Activated CD8-positive, alpha-beta memory T cell treated with anti-CD3 and anti-CD28 coated beads, Interleukin-2, amount 10 ng/mL, durations not matched to agents 7 days and 5 days (primary cell): ENCODE measurements at regions of chr3 and their contacts with region 1.

Region 1: GRCh38 chr3:183099026-183099837 is at the start of gene MCCC1:
- DNase-seq: peak; percentile 99
- ATAC-seq: peak; percentile 99
- H3K4me3 Mint-ChIP-seq: peak within 1 kb of the TSS; percentile 97
- H3K27ac Mint-ChIP-seq: peak within 1 kb of the TSS; percentile 92
- H3K4me1 Mint-ChIP-seq: peaks cover 45% of the 10 kb centered on the region
- H3K27me3 Mint-ChIP-seq: no peaks in the 10 kb centered on the region
- total RNA-seq, gene MCCC1: 30.8 to 44.7 TPM

Region 2: GRCh38 chr3:182909318-182910040 is 189.8 kb before region 1 on chr3:
- CTCF ChIA-PET with region 1: interaction called, 24 read pairs
- DNase-seq: peak; percentile 49
- ATAC-seq: peak; percentile 24
- H3K4me3 Mint-ChIP-seq: no peak overlapping the region
- H3K27ac Mint-ChIP-seq: peak overlapping the region; percentile 68
- H3K4me1 Mint-ChIP-seq: peaks cover 52% of the 10 kb centered on the region
- H3K27me3 Mint-ChIP-seq: no peaks in the 10 kb centered on the region

Region 3: DNA sequence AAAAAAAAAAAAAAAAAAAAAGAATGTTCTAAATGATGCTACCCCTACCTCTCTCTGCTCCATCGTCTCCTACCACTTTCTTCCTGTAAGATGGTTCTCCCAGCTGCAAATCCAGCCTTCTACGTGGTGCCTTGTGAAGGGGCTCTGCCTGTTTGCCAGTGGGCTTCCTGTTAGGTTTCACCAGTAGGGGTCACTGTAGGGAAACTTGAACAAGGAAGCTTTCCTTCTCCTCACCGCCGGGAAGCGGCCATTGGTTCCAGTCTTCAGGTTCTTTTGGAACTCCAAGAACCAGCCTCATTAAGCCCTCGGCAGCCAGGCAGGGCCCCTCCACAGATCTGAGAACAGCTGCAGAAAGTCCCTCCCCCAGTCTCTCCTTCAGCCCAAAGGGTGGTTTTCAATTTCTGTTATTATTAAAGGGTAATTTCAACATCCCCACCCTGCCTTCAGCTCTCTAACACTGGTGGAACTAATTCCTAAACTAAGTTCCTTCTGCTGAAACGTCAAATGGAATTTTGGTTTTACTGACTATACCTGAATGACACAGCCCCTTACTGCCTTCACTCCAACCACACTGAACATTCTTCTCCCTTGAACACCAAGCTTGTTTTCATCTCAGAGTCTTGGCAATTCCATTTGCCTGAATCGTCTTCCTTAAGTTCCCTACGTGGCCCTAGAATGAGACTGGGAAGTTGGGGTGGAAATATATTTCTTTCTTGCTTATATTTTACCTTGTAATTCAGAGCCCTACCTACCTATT is 13.4 kb before region 1 on chr3:
- CTCF ChIA-PET with region 1: interaction called, 16 read pairs
- DNase-seq: peak; percentile 47
- ATAC-seq: peak; percentile 42
- H3K4me3 Mint-ChIP-seq: no peak overlapping the region
- H3K27ac Mint-ChIP-seq: peak overlapping the region; percentile 17
- H3K4me1 Mint-ChIP-seq: peaks cover 12% of the 10 kb centered on the region
- H3K27me3 Mint-ChIP-seq: no peaks in the 10 kb centered on the region